WTC11 (cell line): ENCODE measurements at regions of chr22 and their contacts with region 1.

Region 1: GRCh38 chr22:38927033-38927781 is 30.2 kb upstream of the APOBEC3A start:
- DNase-seq: peak; percentile 85
- ATAC-seq: peak; percentile 94
- H3K4me3 Mint-ChIP-seq: peak overlapping the region; percentile 45
- H3K27ac Mint-ChIP-seq: no peak overlapping the region
- H3K4me1 Mint-ChIP-seq: peaks cover 9% of the 10 kb centered on the region
- H3K27me3 Mint-ChIP-seq: no peaks in the 10 kb centered on the region; the same call in 1 of the 2 replicates
- CTCF ChIP-seq: peak; percentile 59

Region 2: GRCh38 chr22:39003165-39003638 is 76.0 kb after region 1 on chr22:
- CTCF ChIA-PET with region 1: interaction called, 29 read pairs
- POLR2A ChIA-PET with region 1: no interaction called
- DNase-seq: peak; percentile 79
- ATAC-seq: peak; percentile 99
- H3K4me3 Mint-ChIP-seq: no peak overlapping the region
- H3K27ac Mint-ChIP-seq: peak overlapping the region; percentile 71
- H3K4me1 Mint-ChIP-seq: peaks cover 10% of the 10 kb centered on the region
- H3K27me3 Mint-ChIP-seq: no peaks in the 10 kb centered on the region; the same call in 1 of the 2 replicates
- CTCF ChIP-seq: peak; percentile 73

Region 3: DNA sequence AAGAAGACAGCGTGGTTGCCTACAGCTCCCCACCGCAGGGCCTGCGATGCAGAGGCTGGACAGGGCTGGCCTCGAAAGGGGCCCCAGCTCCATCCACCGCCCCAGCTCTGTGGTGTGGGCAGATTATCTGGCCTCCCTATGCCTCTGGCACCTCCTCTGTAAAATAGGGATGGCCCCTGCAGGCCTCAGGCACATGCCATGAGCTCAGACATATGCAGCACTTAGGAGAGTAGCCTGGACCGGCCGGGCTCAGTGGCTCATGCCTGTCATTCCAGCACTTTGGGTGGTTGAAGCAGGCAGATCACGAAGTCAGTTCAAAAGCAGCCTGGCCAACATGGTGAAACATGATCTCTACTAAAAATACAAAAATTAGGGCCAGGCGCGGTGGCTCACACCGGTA is 101.1 kb after region 1 on chr22:
- CTCF ChIA-PET with region 1: no interaction called
- POLR2A ChIA-PET with region 1: no interaction called
- DNase-seq: no peak
- ATAC-seq: no peak
- H3K4me3 Mint-ChIP-seq: no peak overlapping the region
- H3K27ac Mint-ChIP-seq: peak overlapping the region; percentile 57
- H3K4me1 Mint-ChIP-seq: peaks cover 57% of the 10 kb centered on the region
- H3K27me3 Mint-ChIP-seq: no peaks in the 10 kb centered on the region
- CTCF ChIP-seq: no peak